ENCODE measurements at regions of chr1 and their contacts with region 1.

Region 1: DNA sequence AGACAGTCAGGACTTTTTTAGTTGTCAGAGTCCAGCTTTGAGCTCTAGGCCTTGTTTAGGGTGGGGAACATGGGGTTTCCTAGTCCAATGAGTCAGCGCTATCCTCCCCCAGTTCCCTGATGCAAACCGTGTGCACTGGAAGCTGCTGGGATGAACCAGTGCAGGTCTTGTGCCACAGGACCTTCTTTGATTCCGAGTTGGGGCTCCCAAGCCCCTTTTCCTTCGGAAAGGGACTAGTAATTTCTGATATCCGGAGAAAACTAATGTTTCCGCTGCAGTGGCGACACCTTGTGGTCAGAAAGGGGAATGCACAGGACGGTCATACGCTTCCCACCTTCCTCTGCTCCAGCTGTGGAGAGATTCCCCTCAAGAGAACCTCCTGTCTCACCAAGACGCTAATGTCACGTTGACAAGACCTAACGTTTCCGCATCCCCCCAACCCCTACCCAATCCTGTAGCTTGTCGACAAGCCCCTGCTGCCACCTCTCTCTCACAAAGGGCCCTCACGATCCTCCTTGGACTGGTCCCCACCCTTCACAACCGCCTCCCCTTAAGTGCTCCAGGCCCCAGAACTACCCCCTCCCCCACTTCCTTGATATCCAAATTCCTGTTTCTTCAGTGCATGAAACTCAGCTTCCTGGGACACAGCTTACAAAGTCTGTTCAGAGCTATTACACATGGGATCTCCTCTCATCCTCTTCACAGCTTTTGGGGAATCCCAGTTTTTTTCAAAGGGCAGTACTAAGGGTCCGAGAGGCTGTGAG is 30.9 kb downstream of the GPA33 start:
- DNase-seq: peak; percentile 85
- H3K4me3 ChIP-seq: no peak overlapping the region
- H3K27ac ChIP-seq: peak overlapping the region in 1 of 4 donors; percentile 13
- H3K4me1 ChIP-seq: peaks cover 0 to 7% (median 6%) of the 10 kb centered on the region in 4 donors
- H3K27me3 ChIP-seq: peaks cover 0 to 6% (median 0%) of the 10 kb centered on the region in 3 donors
- CTCF ChIP-seq: peak; percentile 82 to 97 (median 92)
- EP300 ChIP-seq: no peak
- POLR2A ChIP-seq: no peak

Region 2: GRCh38 chr1:166676981-166677380 is 382.2 kb before region 1 on chr1:
- intact Hi-C with region 1: no loop called
- DNase-seq: no peak
- H3K4me3 ChIP-seq: no peak overlapping the region
- H3K27ac ChIP-seq: no peak overlapping the region
- H3K4me1 ChIP-seq: no peaks in the 10 kb centered on the region
- H3K27me3 ChIP-seq: no peaks in the 10 kb centered on the region
- CTCF ChIP-seq: no peak
- EP300 ChIP-seq: no peak
- POLR2A ChIP-seq: no peak

Region 3: DNA sequence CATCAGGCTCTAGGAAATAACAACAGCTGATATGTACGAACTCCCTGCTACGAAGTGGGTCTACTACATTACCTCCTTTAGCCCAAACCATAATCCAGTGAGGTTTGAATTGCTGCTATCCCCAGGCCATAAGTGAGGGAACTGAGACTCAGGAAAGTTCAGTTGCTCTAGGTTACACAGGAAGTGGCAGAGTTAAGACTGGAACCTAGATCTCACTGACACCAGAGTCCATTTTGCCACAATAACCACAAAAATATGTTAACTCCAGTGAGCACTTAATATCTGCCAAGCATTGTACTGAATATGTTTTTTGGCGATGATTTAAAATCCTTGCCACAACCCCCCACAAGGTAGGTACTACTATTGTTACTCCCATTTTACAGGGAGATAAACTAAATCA is 174.3 kb before region 1 on chr1:
- intact Hi-C with region 1: loop called (anchors 1 kb)
- DNase-seq: no peak
- H3K4me3 ChIP-seq: no peak overlapping the region
- H3K27ac ChIP-seq: no peak overlapping the region
- H3K4me1 ChIP-seq: peaks cover 0 to 26% (median 15%) of the 10 kb centered on the region in 4 donors
- H3K27me3 ChIP-seq: peaks cover 0 to 14% (median 0%) of the 10 kb centered on the region in 3 donors
- CTCF ChIP-seq: no peak
- EP300 ChIP-seq: no peak
- POLR2A ChIP-seq: no peak

Region 4: GRCh38 chr1:166910396-166910994 is 148.7 kb before region 1 on chr1:
- intact Hi-C with region 1: loop called (anchors 1 kb)
- DNase-seq: peak; percentile 76
- H3K4me3 ChIP-seq: no peak overlapping the region
- H3K27ac ChIP-seq: no peak overlapping the region
- H3K4me1 ChIP-seq: peaks cover 0 to 17% (median 12%) of the 10 kb centered on the region in 4 donors
- H3K27me3 ChIP-seq: no peaks in the 10 kb centered on the region
- CTCF ChIP-seq: peak; percentile 35 to 63 (median 48)
- EP300 ChIP-seq: no peak
- POLR2A ChIP-seq: no peak

Measured in sigmoid colon (tissue), 7 donors.